Left ventricle myocardium superior (tissue), 1 donor: ENCODE measurements at regions of chr12 and their contacts with region 1.

Region 1: DNA sequence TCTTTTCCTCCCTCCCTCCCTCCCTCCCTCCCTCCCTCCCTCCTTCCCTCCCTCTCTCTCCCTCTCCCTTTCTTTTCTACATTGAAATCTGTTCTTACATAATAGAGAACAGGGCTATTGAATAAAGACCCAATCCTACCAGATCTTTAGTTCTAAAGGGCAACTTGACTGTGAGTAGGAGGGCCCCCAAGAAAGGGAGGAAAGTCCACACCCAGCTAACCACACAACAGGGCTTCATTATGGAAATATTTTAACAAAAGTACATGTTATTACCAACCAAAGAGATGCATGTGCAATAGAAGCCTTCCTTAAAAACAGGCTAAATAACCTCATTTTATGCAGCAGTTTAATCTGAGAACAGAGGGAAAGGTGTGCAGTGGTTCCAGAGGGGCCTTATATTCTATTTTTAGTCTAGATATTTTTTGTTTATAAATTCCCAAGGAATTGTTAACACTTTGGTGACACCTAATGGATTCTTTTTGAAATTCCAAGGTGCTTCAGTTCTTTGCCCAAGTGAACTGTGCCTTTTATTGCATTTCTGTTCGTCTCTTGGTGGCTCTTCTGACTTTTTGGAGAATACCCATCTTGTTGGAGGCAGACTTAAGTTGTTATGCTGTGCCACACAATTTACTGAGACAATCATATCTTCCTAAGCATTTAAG is 63.0 kb downstream of the GNS start:
- DNase-seq: no peak
- ATAC-seq: peak; percentile 13

Region 2: GRCh38 chr12:64544371-64545080 is 151.7 kb before region 1 on chr12:
- intact Hi-C with region 1: loop called (anchors 5 kb)
- DNase-seq: no peak
- ATAC-seq: no peak